Posterior cingulate gyrus (tissue), 11 donors: ENCODE measurements at regions of chr1 and their contacts with region 1.

Region 1: DNA sequence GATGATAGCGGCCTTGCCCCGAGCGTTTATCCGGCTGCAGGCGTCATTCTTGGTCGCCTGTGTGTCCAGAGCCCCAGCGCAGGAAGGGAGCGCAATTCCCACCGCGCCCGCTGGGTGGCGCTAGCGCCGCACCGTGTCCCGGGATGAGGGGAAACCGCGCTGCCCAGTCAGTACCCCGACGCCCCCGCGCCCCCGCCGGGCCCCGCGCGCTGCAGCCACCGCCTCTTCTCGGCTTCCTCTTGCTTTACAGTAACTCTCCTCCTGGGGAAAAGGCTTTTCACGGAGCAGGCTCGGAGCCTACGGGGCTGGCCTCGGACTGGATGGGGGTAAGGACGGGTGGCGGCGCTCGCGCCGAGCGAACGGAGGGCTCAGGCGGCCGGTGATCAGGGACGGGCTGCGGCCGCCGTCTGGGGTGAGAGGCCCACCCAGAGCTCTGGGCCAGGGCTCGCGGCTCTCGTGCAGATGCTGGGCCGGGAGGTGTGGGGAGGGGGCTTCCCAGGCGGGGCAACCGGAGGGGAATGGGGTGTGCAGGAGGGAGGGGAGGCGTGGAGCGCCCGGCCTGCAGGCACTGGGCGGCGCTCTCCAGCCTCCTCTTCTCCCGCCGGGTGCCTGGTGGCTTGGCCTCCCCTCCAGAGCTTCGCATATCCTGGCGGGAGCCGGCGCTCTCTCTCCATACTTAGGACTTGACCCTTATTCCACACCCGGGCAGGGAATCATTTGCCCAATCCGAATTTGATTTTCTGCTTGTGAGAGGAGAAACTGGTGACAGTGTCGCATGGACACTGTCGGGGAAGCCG is 29.8 kb downstream of the TEX35 start:
- DNase-seq: peak; percentile 76 to 98 (median 92)

Region 2: DNA sequence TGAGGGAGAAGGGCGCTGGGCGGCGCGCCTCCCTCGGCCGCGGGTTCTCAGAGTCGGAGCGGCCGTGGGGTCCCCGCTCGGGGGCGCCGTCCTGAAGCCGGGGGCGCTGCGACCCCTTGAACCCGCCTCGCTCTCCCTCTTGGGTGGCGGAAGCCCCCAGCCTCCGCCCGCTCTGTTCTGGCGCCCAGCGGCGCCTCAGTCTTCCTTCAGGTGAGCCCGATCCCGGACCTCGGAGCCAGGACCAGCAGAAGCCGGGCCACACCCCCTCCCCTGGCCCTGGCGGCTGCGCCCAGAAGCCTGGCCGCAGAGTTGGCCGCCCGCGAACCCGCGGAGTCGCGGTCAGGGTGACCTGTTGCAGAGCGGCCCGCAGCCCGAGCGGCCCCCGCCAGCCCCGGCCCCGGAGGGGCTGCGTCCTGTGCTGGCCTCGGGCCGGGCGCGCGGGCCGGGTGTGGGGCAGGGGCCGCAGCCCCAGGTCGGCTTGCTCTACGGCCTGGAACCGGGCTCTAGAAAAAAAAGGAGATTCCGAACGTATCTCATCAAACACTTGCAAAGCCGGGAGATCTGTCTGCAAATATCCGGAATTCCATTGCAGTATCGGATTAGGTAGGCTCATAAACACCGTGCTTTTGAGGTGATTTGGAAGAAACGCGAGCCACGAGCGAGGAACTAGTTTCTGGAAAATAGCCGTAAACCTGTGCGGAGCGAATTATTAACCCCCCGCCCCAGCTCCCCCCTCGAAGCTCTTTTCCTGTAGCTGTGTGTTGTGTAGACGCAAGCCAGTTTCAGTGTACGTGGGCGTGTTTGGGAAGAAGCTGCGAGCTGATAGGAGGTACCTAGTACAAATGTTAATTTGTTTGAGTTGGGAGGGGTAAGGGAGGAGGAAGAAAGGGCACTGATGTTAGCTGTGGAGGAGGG is 183.1 kb after region 1 on chr1:
- intact Hi-C with region 1: loop called (anchors 1 kb)
- DNase-seq: peak in 7 of 10 donors; percentile 15 to 79 (median 40)

Region 3: GRCh38 chr1:178749581-178750166 is 206.9 kb after region 1 on chr1:
- intact Hi-C with region 1: loop called (anchors 1 kb)
- DNase-seq: no peak